Activated CD4-positive, alpha-beta T cell treated with anti-CD3 and anti-CD28 coated beads for 36 hours (primary cell): ENCODE measurements at regions of chr1 and their contacts with region 1.

Region 1: DNA sequence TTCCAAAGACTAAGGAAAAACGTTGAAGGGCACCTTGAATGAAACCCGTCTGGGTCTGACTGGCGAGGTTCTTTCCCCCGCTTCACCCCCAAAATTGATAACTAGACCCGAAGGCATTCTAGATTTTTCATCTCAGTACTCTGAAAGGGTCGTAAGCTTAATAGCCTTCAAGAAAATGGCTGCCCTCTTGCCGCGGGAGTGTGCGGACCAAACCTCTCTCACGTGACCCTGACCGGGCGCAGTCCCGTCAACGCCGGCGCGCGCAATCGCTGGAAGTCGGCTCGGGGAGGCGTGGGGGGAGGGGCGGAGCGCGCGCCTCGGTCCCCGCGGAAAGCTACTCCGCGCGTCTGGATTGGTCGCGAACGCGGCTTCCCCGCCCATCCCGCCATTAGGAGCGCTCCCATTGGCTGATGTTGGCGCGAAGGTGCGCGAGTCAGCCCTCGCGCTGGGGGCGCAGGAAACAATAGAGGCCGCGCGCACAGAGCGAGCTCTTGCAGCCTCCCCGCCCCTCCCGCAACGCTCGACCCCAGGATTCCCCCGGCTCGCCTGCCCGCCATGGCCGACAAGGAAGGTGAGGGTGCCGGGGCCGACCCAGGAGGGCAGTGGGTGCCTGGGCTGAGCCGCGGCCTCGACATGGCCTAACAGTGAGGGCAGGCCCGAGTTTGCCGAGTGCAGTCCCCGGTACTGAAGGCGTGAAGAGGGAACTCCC is at the start of gene RBBP4:
- DNase-seq: peak; percentile 99
- ATAC-seq: peak; percentile 89
- H3K4me3 Mint-ChIP-seq: peak within 1 kb of the TSS; percentile 90
- H3K27ac Mint-ChIP-seq: peak within 1 kb of the TSS; percentile 99
- H3K4me1 Mint-ChIP-seq: peaks cover 48% of the 10 kb centered on the region
- H3K27me3 Mint-ChIP-seq: no peaks in the 10 kb centered on the region
- total RNA-seq, gene RBBP4: 323 to 331 TPM

Region 2: DNA sequence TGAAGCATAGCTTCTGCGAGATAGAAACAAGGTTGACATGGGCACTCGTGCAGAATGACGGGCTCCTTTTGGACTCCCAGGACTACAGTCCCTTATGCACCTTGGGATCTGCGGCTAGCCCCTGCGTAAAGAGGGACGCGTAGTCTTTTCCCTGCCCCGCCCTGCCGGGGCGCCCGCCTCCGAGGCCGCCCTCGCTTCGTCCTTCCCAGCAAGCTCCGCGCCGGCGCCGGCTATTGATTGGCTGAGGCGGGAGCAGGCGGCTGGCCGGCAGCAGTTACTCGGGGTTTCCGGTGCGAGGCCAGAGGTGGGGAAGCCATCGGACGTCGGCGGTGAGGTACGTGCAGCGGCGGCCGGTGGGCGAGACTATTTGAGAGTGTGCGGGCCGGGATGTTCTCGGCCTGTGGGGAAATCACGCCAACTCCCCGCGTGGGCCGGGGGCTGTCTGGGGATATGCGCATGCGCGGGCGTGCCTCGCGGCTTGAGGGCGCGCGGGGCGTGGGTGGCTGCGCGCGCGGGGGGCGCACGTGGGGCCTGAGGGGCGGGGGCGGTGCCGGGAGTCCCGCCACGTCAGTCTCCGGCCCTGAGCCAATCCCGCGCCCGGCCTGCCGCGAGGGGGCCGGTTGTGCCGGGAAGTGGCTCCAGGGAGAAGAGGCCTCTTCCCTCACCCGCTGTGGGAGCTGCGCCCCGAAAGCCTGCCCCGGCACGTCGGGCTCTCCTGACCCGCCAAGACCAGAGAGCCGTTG is 471.3 kb before region 1 on chr1 and contains the start of gene TXLNA:
- CTCF ChIA-PET with region 1: no interaction called
- POLR2A ChIA-PET with region 1: no interaction called
- intact Hi-C with region 1: loop called in 1 of 2 experiments (anchors 1 kb)
- DNase-seq: peak; percentile 96
- ATAC-seq: peak; percentile 93
- H3K4me3 Mint-ChIP-seq: peak within 1 kb of the TSS; percentile 86
- H3K27ac Mint-ChIP-seq: peak within 1 kb of the TSS; percentile 98
- H3K4me1 Mint-ChIP-seq: peaks cover 44% of the 10 kb centered on the region
- H3K27me3 Mint-ChIP-seq: no peaks in the 10 kb centered on the region
- total RNA-seq, gene TXLNA: 79.5 to 79.7 TPM

Region 3: GRCh38 chr1:32394141-32394889 is 256.6 kb before region 1 on chr1 and contains the start of gene BSDC1:
- CTCF ChIA-PET with region 1: interaction called, 3 read pairs
- POLR2A ChIA-PET with region 1: interaction called, 3 read pairs
- intact Hi-C with region 1: loop called in 1 of 2 experiments (anchors 1 kb)
- DNase-seq: peak; percentile 100
- ATAC-seq: peak; percentile 98
- H3K4me3 Mint-ChIP-seq: peak within 1 kb of the TSS; percentile 83
- H3K27ac Mint-ChIP-seq: peak within 1 kb of the TSS; percentile 98
- H3K4me1 Mint-ChIP-seq: peaks cover 19% of the 10 kb centered on the region
- H3K27me3 Mint-ChIP-seq: no peaks in the 10 kb centered on the region
- total RNA-seq, gene BSDC1: 29.4 to 36.9 TPM

Region 4: DNA sequence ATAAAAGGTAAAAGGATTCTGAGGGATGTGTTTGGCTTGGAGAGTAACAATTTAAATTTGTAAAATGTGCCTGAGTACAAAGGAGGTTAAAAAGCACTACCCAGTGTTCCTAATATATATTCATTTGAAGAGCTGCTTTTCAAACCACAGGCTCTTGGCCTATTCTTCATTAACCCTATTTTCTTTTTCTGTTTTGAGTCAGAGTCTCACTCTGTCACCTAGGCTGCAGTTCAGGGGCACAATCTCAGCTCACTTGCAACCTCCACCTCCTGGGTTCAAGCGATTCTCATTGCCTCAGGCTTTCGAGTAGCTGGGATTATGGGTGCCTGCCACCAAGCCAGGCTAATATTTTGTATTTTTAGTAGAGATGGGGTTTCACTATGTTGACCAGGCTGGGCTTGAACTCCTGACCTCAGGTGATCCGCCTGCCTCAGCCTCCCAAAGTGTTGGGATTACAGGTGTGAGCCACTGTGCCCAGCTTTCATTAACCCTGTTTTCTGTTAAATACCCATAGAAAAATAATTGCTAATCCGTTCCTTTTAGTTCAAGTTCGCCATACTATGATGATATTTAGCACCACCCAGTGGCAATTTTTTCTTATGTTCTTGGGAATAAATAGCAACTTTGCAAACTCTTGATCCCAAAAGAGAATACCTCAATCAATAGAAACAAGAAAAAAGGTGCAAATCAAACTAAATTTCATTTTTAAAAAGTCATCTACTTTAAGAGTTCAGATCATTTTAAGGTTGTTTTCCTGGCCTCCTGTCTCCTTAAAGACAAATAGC is 31.0 kb before region 1 on chr1:
- CTCF ChIA-PET with region 1: interaction called, 4 read pairs
- POLR2A ChIA-PET with region 1: interaction called, 3 read pairs
- intact Hi-C with region 1: loop called (anchors 1 kb)
- DNase-seq: peak; percentile 23
- ATAC-seq: no peak
- H3K4me3 Mint-ChIP-seq: no peak overlapping the region
- H3K27ac Mint-ChIP-seq: no peak overlapping the region
- H3K4me1 Mint-ChIP-seq: peaks cover 34% of the 10 kb centered on the region
- H3K27me3 Mint-ChIP-seq: no peaks in the 10 kb centered on the region

Region 5: DNA sequence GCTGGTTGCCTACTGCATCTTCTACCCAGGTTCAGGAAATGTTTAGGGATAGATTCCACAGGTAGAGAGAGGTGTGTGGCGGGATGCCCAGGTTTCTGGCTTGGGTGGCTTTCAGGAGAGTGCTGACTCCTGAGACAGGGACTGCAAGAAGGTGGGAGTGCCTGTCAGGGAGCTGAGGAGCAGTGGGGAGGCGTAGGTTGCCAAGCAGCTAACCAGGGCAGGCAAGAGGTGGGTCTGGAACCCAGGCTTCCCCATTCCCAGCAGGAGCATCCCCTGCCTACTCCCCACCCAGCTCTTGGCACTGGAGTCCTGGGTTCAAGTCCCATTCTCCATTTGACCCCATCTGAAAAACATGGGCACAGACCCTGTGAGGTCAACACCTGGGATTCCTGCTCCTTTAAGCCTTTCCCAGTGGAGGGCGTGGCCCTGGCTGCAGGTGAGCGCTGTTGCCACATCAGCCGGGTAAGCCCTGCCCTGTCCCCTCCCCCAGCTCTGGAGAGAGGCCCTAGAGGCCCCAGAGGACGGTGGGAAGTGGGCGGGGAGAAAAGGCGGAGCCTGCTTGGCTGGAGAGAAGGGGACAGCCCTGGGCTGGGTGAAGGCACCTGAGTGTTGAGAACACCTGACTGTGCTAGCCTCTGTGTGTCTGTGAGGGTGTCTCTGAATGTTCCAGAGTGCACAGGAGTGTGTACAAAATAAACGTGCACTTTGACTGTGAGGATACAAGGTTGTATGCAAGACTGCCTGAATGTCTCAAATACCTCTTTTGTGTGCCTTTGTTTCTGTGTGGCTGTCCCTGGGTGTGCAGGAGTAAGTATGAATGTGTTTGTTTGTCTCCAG is 65.6 kb after region 1 on chr1:
- CTCF ChIA-PET with region 1: no interaction called
- POLR2A ChIA-PET with region 1: no interaction called
- intact Hi-C with region 1: no loop called
- DNase-seq: peak; percentile 88
- ATAC-seq: peak; percentile 93
- H3K4me3 Mint-ChIP-seq: no peak overlapping the region
- H3K27ac Mint-ChIP-seq: no peak overlapping the region
- H3K4me1 Mint-ChIP-seq: peaks cover 12% of the 10 kb centered on the region
- H3K27me3 Mint-ChIP-seq: peaks cover 2% of the 10 kb centered on the region

Region 6: DNA sequence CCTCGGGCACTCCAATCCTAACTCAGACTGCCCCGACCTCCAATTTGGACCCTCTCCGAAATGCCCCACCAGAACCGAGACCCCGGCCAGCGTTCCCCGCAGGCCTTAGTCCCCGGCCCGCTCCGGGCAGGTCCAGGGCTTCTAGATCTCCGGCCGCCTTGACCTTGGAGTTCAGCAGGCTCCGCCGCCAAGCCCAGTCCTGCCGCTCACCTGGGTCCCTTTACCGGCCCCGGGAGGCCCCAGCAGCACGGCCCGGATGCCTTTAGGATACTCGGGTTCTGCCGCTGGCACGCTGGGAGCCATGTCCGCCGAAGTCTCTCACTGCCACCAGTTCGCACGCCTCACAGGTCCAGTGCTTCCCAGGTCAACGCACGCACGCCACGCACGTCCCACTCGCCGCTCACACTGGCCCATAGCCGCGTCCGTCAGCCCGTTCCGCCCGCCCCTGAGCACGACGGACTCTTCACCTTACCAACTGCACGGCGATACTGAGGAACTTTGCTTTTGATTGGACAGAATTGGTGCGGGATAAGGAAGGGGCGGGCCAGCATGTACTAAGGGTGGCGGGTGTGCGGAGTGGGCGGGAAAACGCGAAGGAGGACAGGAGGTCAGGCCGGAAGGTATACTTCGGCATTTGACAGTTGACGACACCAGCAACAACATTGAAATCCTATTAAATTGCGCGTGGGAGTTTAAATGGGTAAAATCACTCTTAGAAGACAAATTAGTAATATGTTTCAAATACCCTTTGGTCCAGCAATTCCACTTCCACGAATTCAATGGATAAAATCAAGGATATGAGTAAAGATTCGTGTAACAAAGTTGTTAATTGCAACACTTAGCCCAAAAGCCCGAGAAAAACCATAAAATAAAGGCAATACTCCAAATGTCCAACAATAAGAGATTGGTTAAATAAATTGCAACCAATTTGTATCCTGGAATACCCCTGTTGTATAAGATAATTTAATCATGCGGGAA is 385.9 kb after region 1 on chr1 and contains the start of gene AK2:
- CTCF ChIA-PET with region 1: no interaction called
- POLR2A ChIA-PET with region 1: no interaction called
- intact Hi-C with region 1: loop called in 1 of 2 experiments (anchors 1 kb)
- DNase-seq: peak; percentile 96
- ATAC-seq: peak; percentile 100
- H3K4me3 Mint-ChIP-seq: peak within 1 kb of the TSS; percentile 96
- H3K27ac Mint-ChIP-seq: peak within 1 kb of the TSS; percentile 87
- H3K4me1 Mint-ChIP-seq: peaks cover 41% of the 10 kb centered on the region
- H3K27me3 Mint-ChIP-seq: no peaks in the 10 kb centered on the region
- total RNA-seq, gene AK2: 386 to 464 TPM